Activated CD4-positive, alpha-beta memory T cell treated with anti-CD3 and anti-CD28 coated beads for 36 hours (primary cell): ENCODE measurements at regions of chr5 and their contacts with region 1.

Region 1: GRCh38 chr5:149834246-149834855 is 104.2 kb downstream of the PPARGC1B start:
- DNase-seq: peak; percentile 60
- H3K4me3 Mint-ChIP-seq: no peak overlapping the region
- H3K27ac Mint-ChIP-seq: no peak overlapping the region
- H3K4me1 Mint-ChIP-seq: peaks cover 5% of the 10 kb centered on the region
- H3K27me3 Mint-ChIP-seq: no peaks in the 10 kb centered on the region

Region 2: GRCh38 chr5:149667084-149667828 is 167.1 kb before region 1 on chr5:
- CTCF ChIA-PET with region 1: interaction called, 86 read pairs
- POLR2A ChIA-PET with region 1: no interaction called
- intact Hi-C with region 1: no loop called
- DNase-seq: peak; percentile 34
- H3K4me3 Mint-ChIP-seq: no peak overlapping the region
- H3K27ac Mint-ChIP-seq: no peak overlapping the region
- H3K4me1 Mint-ChIP-seq: no peaks in the 10 kb centered on the region
- H3K27me3 Mint-ChIP-seq: peaks cover 6% of the 10 kb centered on the region

Region 3: GRCh38 chr5:149847611-149848010 is 13.3 kb after region 1 on chr5:
- CTCF ChIA-PET with region 1: interaction called, 76 read pairs
- POLR2A ChIA-PET with region 1: interaction called, 3 read pairs
- intact Hi-C with region 1: no loop called
- DNase-seq: no peak
- H3K4me3 Mint-ChIP-seq: no peak overlapping the region
- H3K27ac Mint-ChIP-seq: no peak overlapping the region
- H3K4me1 Mint-ChIP-seq: no peaks in the 10 kb centered on the region
- H3K27me3 Mint-ChIP-seq: no peaks in the 10 kb centered on the region

Region 4: DNA sequence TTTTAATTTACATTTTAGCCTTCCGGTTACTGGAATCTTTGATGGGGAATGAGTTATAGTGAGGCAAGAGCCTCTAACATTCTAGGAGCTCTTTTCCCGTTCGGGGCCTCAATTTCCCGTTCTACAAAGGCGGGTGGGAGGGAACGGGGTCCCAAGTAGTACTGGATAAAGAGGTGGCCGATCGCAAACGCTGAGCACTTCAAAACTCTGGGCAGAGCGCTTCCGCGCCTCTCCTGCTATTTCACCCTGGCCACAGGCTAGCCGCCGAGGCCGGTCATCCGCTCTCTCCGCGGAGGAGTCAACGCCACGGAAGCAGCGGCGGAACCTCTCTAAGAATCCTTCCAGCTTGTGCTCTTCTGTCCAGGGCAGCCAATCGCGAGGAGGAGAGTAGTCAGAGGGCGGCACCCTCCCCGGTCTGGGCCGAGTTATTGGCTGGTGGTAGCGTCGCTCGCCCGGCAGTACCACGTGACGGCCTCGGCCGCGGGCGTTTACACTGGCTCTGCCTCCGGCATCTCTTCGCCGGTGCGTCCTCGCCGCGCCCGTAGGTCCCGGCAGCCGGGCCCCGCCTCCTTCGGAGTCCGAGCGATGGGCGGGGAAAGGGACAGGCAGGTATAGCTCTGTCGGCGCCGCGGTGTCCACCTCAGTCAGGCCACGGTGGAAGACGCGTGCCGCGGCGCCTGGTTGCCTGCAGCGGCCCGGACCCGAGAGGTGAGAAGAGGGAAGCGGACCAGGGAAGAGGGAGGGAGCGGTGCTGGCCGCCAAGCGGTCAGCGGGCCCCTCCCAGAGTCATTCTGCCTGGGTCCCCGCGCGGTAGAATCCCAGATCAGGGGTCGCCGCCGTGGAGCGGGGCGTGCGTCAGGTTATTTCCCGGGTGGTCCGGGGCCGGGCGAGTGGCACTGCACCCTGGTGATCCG is 126.2 kb after region 1 on chr5 and contains the start of gene SLC26A2:
- CTCF ChIA-PET with region 1: interaction called, 172 read pairs
- POLR2A ChIA-PET with region 1: interaction called, 9 read pairs
- intact Hi-C with region 1: loop called (anchors 1 kb)
- DNase-seq: peak; percentile 97
- H3K4me3 Mint-ChIP-seq: peak within 1 kb of the TSS; percentile 91
- H3K27ac Mint-ChIP-seq: peak within 1 kb of the TSS; percentile 97
- H3K4me1 Mint-ChIP-seq: peaks cover 25% of the 10 kb centered on the region
- H3K27me3 Mint-ChIP-seq: no peaks in the 10 kb centered on the region
- total RNA-seq, gene SLC26A2: 5.9 to 6.2 TPM

Region 5: GRCh38 chr5:149990518-149991376 is 156.4 kb after region 1 on chr5:
- CTCF ChIA-PET with region 1: interaction called, 269 read pairs
- POLR2A ChIA-PET with region 1: no interaction called
- intact Hi-C with region 1: loop called (anchors 1 kb)
- DNase-seq: peak; percentile 76
- H3K4me3 Mint-ChIP-seq: no peak overlapping the region
- H3K27ac Mint-ChIP-seq: no peak overlapping the region
- H3K4me1 Mint-ChIP-seq: no peaks in the 10 kb centered on the region
- H3K27me3 Mint-ChIP-seq: no peaks in the 10 kb centered on the region

Region 6: GRCh38 chr5:150217873-150218692 is 383.7 kb after region 1 on chr5:
- CTCF ChIA-PET with region 1: interaction called, 7 read pairs
- POLR2A ChIA-PET with region 1: no interaction called
- intact Hi-C with region 1: loop called (anchors 5 kb)
- DNase-seq: peak; percentile 87
- H3K4me3 Mint-ChIP-seq: no peak overlapping the region
- H3K27ac Mint-ChIP-seq: no peak overlapping the region
- H3K4me1 Mint-ChIP-seq: no peaks in the 10 kb centered on the region
- H3K27me3 Mint-ChIP-seq: peaks cover 4% of the 10 kb centered on the region